ENCODE measurements at regions of chr6 and their contacts with region 1.

Region 1: DNA sequence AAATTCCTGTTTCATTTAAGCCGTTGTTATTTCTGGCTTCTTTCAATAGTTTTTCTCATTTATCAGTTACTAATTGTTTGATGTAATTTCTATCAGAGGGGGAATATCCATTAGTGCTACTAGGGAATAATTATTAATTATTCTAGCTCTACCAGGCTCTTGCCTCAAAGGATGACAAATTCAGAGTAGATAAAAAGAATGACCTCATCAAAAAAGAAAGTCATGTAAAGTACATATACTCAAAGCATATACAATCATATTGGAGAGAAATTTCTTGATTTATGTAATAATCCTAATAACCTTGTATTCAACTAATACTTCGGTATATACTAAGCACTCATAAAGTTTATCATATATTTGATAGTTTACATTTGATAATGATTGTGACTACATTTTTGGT is 99.7 kb upstream of the FBXL4 start:
- DNase-seq: no peak
- ATAC-seq: no peak
- H3K4me3 ChIP-seq: no peak overlapping the region
- H3K27ac ChIP-seq: no peak overlapping the region
- H3K4me1 ChIP-seq: no peaks in the 10 kb centered on the region
- H3K27me3 ChIP-seq: no peaks in the 10 kb centered on the region
- CTCF ChIP-seq: no peak

Region 2: DNA sequence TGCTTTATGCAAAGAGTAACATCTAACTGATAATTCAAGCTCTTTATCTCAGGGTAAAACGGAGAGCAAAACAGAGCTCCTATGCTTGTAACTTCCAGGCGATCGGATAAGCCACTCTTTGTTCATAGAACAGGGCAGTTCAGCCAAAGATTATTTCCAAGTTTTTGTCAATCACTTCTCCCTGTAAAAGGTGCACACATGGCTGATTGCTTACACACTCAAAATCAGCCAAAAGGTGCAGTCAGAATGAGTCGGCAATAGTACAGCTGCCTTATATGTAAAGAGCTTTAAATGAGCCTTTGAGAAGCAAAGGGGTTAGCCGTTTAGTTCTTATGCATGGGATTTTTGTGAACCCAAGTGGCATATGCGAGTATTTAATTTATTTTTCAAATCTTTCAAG is 662.6 kb before region 1 on chr6:
- CTCF ChIA-PET with region 1: no interaction called
- POLR2A ChIA-PET with region 1: no interaction called
- in situ Hi-C with region 1: no loop called
- intact Hi-C with region 1: no loop called
- DNase-seq: no peak
- ATAC-seq: no peak
- H3K4me3 ChIP-seq: no peak overlapping the region
- H3K27ac ChIP-seq: no peak overlapping the region
- H3K4me1 ChIP-seq: no peaks in the 10 kb centered on the region
- H3K27me3 ChIP-seq: 0 out of 2 replicates have a peak, but pooled peaks cover 3% of the 10 kb centered on the region
- CTCF ChIP-seq: no peak

Region 3: DNA sequence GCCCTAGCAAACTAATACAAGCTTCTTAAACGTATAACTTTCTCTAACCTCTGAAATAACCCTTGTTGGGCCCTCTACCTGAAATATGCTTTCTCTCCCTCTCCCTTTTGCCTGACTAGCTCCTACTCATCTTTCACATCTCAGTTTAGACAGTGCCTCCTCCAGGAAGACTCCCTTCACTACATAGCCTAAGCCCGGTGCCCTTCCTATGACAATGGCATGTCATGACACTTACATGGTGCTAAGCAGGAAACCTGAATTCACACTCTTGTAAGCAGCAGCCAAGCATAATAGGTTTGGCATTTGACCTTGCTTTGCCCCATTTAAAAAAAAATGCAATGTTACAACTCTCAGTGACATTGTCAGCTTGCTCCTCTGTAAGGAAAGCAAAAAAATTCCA is 66.6 kb before region 1 on chr6:
- CTCF ChIA-PET with region 1: no interaction called
- POLR2A ChIA-PET with region 1: no interaction called
- in situ Hi-C with region 1: no loop called
- intact Hi-C with region 1: loop called (anchors 2 kb)
- DNase-seq: no peak
- ATAC-seq: no peak
- H3K4me3 ChIP-seq: no peak overlapping the region
- H3K27ac ChIP-seq: no peak overlapping the region
- H3K4me1 ChIP-seq: no peaks in the 10 kb centered on the region
- H3K27me3 ChIP-seq: peaks cover 2% of the 10 kb centered on the region; the same call in 1 of the 2 replicates
- CTCF ChIP-seq: 0 out of 2 replicates have a peak, but pooled peaks have one; percentile 4